SK-N-SH (cell line): ENCODE measurements at regions of chr2 and their contacts with region 1.

Region 1: GRCh38 chr2:27095745-27096651 is 9.4 kb downstream of the KHK start:
- DNase-seq: peak; percentile 91
- H3K4me3 ChIP-seq: peak overlapping the region in 1 of 2 experiments; percentile 43; a peak in 2 of 4 replicates
- H3K27ac ChIP-seq: peak overlapping the region in 1 of 2 experiments; percentile 92; a peak in 2 of 4 replicates
- H3K4me1 ChIP-seq: peaks cover 4 to 21% of the 10 kb centered on the region in 2 experiments; a peak in 2 of 4 replicates
- H3K27me3 ChIP-seq: no peaks in the 10 kb centered on the region
- CTCF ChIP-seq: no peak
- EP300 ChIP-seq: no peak
- RAD21 ChIP-seq: peak; percentile 35

Region 2: GRCh38 chr2:27078267-27079194 is 17.5 kb before region 1 on chr2 and contains the start of gene EMILIN1:
- CTCF ChIA-PET with region 1: interaction called, 75 read pairs
- POLR2A ChIA-PET with region 1: interaction called, 3 read pairs
- DNase-seq: peak; percentile 97
- H3K4me3 ChIP-seq: peak within 1 kb of the TSS; percentile 79 to 93
- H3K27ac ChIP-seq: peak within 1 kb of the TSS; percentile 79 to 99
- H3K4me1 ChIP-seq: peaks cover 36 to 76% of the 10 kb centered on the region in 2 experiments
- H3K27me3 ChIP-seq: no peaks in the 10 kb centered on the region
- CTCF ChIP-seq: peak; percentile 24
- EP300 ChIP-seq: peak; percentile 86 to 91; a peak in 3 of 4 replicates
- RAD21 ChIP-seq: peak; percentile 17
- polyA plus RNA-seq, gene EMILIN1: 184 and 286 TPM in 2 replicates

Region 3: DNA sequence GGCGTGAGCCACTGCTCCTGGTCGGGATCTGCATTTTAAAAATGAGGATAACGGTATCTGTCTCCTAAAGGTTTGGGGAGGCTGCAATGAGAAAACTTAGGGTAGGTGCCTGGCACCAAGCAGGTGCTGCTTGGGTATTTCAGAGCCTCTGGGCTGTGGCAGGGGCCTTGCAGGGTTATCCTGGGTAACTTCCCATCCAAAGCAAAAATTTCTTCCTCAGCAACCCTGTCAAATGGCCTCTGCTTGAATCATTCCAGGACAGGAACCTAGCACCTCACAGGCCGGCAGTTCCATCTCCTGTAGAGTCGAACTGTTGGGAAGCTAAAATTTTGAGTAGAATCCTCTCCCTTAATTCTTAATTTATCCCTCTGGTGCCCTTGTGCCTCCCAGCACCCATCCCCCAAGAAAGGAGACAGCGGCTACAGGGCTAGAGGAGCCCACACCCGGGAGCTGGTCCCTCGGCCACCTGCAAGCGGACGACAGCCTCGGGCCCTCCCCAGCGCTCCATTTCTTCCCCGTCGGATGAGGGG is 22.1 kb after region 1 on chr2:
- CTCF ChIA-PET with region 1: interaction called, 78 read pairs
- POLR2A ChIA-PET with region 1: interaction called, 3 read pairs
- DNase-seq: peak; percentile 52
- H3K4me3 ChIP-seq: peak overlapping the region; percentile 60 to 70
- H3K27ac ChIP-seq: peak overlapping the region in 1 of 2 experiments; percentile 48; a peak in 1 of 4 replicates
- H3K4me1 ChIP-seq: peaks cover 0 to 12% of the 10 kb centered on the region in 2 experiments; a peak in 1 of 4 replicates
- H3K27me3 ChIP-seq: no peaks in the 10 kb centered on the region
- CTCF ChIP-seq: no peak
- EP300 ChIP-seq: no peak
- RAD21 ChIP-seq: no peak

Region 4: DNA sequence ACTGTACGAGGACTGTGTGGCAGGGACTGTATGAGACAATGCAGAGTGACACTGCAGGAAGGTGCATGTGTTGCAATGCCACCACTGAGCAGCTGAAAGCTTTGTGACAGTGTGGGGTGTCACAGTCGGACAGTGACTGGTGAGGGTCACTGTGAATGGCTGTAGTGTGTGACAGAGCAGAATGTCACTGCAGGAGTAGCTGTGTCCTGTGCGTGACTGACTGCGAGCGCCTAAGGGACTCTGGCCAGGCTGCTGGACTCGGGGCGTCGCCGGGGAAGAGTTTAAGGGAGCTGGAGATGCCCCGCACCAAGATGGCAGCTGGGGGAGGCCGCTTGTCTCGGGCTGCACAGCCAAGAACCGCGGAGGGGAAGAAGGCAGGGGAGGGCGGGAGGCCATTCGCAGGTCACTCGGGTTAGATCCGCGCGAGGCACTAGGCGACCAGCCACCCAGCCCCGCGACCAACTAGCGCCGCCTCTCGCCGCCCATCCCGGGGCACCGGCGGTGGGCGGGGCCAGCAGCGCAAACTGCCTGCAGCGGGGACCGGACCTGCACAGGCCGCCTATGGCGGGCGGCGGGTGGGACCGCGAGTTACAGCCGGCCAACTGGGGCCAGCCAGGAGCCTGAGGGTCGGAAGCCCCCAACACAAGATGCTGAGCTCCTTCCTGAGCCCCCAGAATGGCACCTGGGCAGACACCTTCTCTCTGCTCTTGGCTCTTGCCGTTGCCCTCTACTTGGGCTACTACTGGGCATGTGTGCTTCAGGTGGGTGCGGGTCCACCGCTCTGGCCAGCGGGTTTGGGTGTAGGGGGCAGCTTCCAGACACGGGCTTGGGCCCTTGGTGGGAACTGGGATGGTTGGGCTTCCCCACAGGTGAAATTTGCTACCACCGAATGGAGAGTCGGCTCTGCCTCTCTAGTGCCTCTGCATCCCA is 27.6 kb after region 1 on chr2 and contains the start of gene ABHD1:
- CTCF ChIA-PET with region 1: interaction called, 13 read pairs
- POLR2A ChIA-PET with region 1: interaction called, 3 read pairs
- DNase-seq: peak; percentile 94
- H3K4me3 ChIP-seq: peak within 1 kb of the TSS; percentile 54 to 59
- H3K27ac ChIP-seq: peak within 1 kb of the TSS in 1 of 2 experiments; percentile 64; a peak in 1 of 4 replicates
- H3K4me1 ChIP-seq: peaks cover 0 to 18% of the 10 kb centered on the region in 2 experiments; a peak in 1 of 4 replicates
- H3K27me3 ChIP-seq: no peaks in the 10 kb centered on the region
- CTCF ChIP-seq: no peak
- EP300 ChIP-seq: no peak
- RAD21 ChIP-seq: no peak
- polyA plus RNA-seq, gene ABHD1: 3.3 and 4.1 TPM in 2 replicates

Region 5: DNA sequence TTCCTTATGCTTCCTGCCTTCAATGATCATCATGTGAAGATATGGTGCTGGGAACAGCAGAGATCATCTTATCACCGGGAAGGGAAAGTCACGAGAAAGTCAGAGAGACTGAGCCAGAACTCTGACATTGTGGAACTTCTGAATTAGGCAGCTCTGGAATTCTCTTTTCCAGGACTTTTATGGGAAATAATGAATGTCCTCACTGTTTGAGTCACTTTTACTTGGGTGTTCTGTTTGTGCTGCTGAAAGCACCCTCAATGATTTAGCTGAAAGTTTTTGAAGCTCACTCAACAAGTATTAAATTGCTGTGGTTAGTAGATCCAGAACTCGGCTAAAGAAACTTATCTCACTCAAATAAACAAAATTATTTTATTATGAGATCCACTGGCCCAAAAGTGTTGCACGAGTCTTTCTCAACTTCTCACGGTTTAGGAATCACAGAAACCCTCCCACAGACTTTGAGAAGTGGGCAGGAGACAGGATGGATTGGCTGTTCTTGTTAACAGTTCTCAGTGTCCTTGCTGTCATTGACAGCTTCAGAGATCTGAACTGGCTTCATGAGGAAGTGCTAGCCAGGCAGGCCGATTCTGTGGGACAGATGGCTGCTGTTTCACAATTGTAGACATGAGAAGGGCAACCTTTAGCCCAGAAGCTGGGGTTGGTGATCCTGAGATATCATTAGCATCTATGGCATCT is 89.5 kb after region 1 on chr2:
- CTCF ChIA-PET with region 1: interaction called, 131 read pairs
- POLR2A ChIA-PET with region 1: no interaction called
- DNase-seq: no peak
- H3K4me3 ChIP-seq: no peak overlapping the region
- H3K27ac ChIP-seq: peak overlapping the region in 1 of 2 experiments; percentile 46; a peak in 2 of 4 replicates
- H3K4me1 ChIP-seq: peaks cover 0 to 26% of the 10 kb centered on the region in 2 experiments; a peak in 3 of 4 replicates
- H3K27me3 ChIP-seq: no peaks in the 10 kb centered on the region
- CTCF ChIP-seq: no peak
- EP300 ChIP-seq: no peak
- RAD21 ChIP-seq: no peak

Region 6: GRCh38 chr2:27291865-27292264 is 195.9 kb after region 1 on chr2:
- CTCF ChIA-PET with region 1: interaction called, 10 read pairs
- POLR2A ChIA-PET with region 1: no interaction called
- DNase-seq: no peak
- H3K4me3 ChIP-seq: no peak overlapping the region
- H3K27ac ChIP-seq: no peak overlapping the region
- H3K4me1 ChIP-seq: peaks cover 2 to 13% of the 10 kb centered on the region in 2 experiments; a peak in 3 of 4 replicates
- H3K27me3 ChIP-seq: no peaks in the 10 kb centered on the region
- CTCF ChIP-seq: peak; percentile 38
- EP300 ChIP-seq: no peak
- RAD21 ChIP-seq: peak; percentile 26